ENCODE measurements at regions of chr19 and their contacts with region 1.

Region 1: DNA sequence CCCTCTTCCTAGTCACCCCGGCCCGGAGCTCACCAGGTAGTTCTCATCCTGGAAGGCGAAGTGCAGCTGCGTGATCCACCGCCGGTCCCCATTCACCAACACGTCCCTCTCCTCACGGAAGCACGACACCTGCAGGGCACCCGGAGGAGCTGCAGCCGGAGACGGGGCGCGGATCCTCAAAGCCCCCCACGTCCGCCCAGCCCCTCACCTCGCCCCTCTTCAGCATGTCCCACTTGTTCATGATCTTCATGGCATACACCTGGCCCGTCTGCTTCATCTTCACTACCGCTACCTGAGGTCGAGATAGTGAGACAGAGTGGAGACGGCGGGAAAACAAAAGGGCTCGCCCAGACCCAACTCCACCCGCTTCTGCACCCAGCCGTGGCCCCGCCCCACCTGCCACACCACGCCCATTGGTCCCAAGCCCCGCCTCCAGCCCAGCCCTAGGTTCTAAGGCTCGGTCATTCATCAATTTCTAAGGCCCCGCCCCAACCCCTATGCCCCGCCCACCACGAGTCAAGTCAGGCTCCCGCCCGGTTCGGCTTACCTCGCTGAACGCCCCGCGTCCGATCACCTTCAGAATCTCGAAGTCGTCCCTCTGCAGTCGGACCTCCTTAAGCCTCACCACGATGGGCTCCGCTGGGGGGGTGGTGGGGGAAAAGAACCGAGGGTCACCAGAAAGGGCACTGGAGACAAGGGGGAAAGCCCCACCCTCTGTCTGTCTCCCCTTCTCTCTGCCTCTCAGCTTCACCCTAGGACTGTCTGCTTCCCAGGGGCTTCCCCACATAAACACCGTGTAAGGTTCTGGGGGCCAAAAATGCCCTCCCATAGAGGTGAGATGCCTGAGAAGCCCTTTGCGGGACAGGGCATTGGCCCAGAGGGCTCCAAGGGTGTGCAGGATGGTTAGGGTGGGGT is 2.8 kb downstream of the DMPK start:
- DNase-seq: no peak
- ATAC-seq: peak; percentile 16; the same call in 1 of the 2 replicates
- H3K4me3 ChIP-seq: no peak overlapping the region
- H3K27ac ChIP-seq: no peak overlapping the region
- H3K4me1 ChIP-seq: peaks cover 28% of the 10 kb centered on the region
- H3K27me3 ChIP-seq: no peaks in the 10 kb centered on the region
- CTCF ChIP-seq: no peak
- POLR2A ChIP-seq: no peak
- RAD21 ChIP-seq: no peak

Region 2: GRCh38 chr19:45792470-45793177 is 13.1 kb after region 1 on chr19 and contains the start of gene DMWD:
- CTCF ChIA-PET with region 1: no interaction called
- POLR2A ChIA-PET with region 1: interaction called, 13 read pairs
- dilution Hi-C with region 1: no loop called
- in situ Hi-C with region 1: no loop called
- intact Hi-C with region 1: no loop called
- DNase-seq: peak; percentile 98
- ATAC-seq: peak; percentile 99
- H3K4me3 ChIP-seq: peak within 1 kb of the TSS; percentile 82
- H3K27ac ChIP-seq: peak within 1 kb of the TSS; percentile 84
- H3K4me1 ChIP-seq: peaks cover 6% of the 10 kb centered on the region
- H3K27me3 ChIP-seq: no peaks in the 10 kb centered on the region
- CTCF ChIP-seq: no peak
- POLR2A ChIP-seq: peak; percentile 88
- RAD21 ChIP-seq: no peak
- total RNA-seq, gene DMWD: 9.7 and 10.0 TPM in 2 replicates

Region 3: GRCh38 chr19:45817010-45817724 is 37.7 kb after region 1 on chr19:
- CTCF ChIA-PET with region 1: no interaction called
- POLR2A ChIA-PET with region 1: interaction called, 14 read pairs
- dilution Hi-C with region 1: no loop called
- in situ Hi-C with region 1: no loop called
- intact Hi-C with region 1: no loop called
- DNase-seq: peak; percentile 90
- ATAC-seq: peak; percentile 97
- H3K4me3 ChIP-seq: no peak overlapping the region
- H3K27ac ChIP-seq: no peak overlapping the region
- H3K4me1 ChIP-seq: no peaks in the 10 kb centered on the region
- H3K27me3 ChIP-seq: no peaks in the 10 kb centered on the region
- CTCF ChIP-seq: peak; percentile 99
- POLR2A ChIP-seq: no peak
- RAD21 ChIP-seq: peak; percentile 68

Region 4: DNA sequence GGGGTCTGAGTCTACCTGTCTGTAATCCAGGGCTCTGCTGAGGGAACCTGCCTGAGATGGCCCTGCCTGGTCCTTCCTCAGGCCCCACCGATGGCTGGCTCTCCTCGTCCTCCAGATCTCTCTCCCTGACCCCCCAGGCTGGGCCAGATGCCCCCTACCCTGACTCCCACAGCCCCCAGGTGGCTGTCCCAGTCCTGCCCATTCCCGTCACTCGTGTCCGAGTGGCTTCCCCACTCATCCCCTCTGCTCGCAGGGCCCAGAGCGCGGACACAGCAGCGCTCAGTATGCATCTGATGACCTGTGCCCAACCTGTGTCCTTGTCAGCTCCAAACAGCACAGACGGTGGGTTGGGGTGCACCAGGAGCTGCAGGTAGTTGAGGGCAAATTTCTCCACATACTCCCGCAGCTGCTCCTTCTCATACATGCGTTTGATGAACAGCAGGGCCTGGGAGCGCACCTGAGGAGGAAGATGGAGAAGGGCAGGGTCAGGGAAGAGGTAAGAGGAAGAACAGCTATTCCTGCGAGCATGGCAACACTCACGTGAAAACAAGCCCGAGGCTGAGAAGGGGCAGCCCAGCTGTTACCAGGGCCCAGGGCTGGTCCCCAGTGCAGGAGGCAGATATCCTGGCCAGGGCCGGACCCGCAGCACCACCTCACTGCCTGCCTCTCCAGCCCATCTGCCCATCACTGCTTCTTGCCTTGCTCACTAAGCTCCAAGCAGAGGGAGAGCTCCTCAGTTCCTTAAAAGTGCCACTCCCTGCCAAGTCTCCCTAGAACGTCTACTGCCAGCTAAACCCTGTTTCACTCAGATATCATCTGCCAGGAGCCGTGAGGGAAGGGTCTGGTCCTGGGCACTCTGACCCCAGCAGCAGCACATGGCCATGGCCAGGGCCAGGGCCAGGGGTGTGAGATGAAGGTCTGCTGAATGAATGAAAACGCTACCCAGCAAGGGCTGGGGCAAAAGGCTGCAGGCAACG is 46.7 kb after region 1 on chr19:
- CTCF ChIA-PET with region 1: no interaction called
- POLR2A ChIA-PET with region 1: interaction called, 17 read pairs
- dilution Hi-C with region 1: no loop called
- in situ Hi-C with region 1: no loop called
- intact Hi-C with region 1: no loop called
- DNase-seq: no peak
- ATAC-seq: no peak
- H3K4me3 ChIP-seq: no peak overlapping the region
- H3K27ac ChIP-seq: no peak overlapping the region
- H3K4me1 ChIP-seq: no peaks in the 10 kb centered on the region
- H3K27me3 ChIP-seq: no peaks in the 10 kb centered on the region
- CTCF ChIP-seq: no peak
- POLR2A ChIP-seq: no peak
- RAD21 ChIP-seq: no peak

Measured in IMR-90 (cell line).